Aorta (tissue), 5 donors: ENCODE measurements at regions of chr1 and their contacts with region 1.

Region 1: GRCh38 chr1:60564916-60565750 is 491.6 kb upstream of the C1orf87 start:
- DNase-seq: no peak
- ATAC-seq: peak; percentile 44
- H3K4me3 ChIP-seq: no peak overlapping the region
- H3K27ac ChIP-seq: peak overlapping the region in 1 of 2 donors; percentile 28
- H3K4me1 ChIP-seq: peaks cover 3 to 12% of the 10 kb centered on the region in 2 donors
- H3K27me3 ChIP-seq: no peaks in the 10 kb centered on the region

Region 2: DNA sequence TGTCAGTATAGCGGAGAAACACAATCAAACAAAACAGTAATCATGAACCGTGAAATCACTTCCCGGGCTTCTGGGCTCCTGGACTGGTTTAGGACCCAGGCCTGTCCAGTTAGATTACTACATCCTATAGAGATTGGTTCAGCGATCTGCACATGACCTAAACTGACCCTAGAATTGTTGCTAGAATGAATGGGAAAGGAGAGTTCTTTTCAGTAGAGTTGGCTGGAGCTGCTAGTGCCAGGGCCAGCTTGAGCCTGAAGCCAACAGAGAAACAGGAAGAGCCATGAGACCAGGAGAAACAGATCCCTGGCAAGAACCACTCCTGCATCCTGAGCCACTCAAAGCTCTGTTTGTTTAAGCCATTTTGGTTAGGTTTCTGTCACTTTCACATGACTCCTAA is 17.3 kb before region 1 on chr1:
- intact Hi-C with region 1: loop called in 1 of 2 experiments (anchors 2 kb)
- DNase-seq: peak in 1 of 2 donors; percentile 46
- ATAC-seq: peak; percentile 60
- H3K4me3 ChIP-seq: no peak overlapping the region
- H3K27ac ChIP-seq: peak overlapping the region in 1 of 2 donors; percentile 13
- H3K4me1 ChIP-seq: peaks cover 0 to 7% of the 10 kb centered on the region in 2 donors
- H3K27me3 ChIP-seq: no peaks in the 10 kb centered on the region

Region 3: GRCh38 chr1:60621368-60621851 is 56.3 kb after region 1 on chr1:
- intact Hi-C with region 1: loop called in 1 of 2 experiments (anchors 10 kb)
- DNase-seq: no peak
- ATAC-seq: no peak
- H3K4me3 ChIP-seq: peak overlapping the region in 1 of 2 donors; percentile 48
- H3K27ac ChIP-seq: no peak overlapping the region
- H3K4me1 ChIP-seq: peaks cover 1 to 4% of the 10 kb centered on the region in 2 donors
- H3K27me3 ChIP-seq: no peaks in the 10 kb centered on the region